Activated CD4-positive, alpha-beta memory T cell treated with anti-CD3 and anti-CD28 coated beads for 36 hours (primary cell): ENCODE measurements at regions of chr16 and their contacts with region 1.

Region 1: DNA sequence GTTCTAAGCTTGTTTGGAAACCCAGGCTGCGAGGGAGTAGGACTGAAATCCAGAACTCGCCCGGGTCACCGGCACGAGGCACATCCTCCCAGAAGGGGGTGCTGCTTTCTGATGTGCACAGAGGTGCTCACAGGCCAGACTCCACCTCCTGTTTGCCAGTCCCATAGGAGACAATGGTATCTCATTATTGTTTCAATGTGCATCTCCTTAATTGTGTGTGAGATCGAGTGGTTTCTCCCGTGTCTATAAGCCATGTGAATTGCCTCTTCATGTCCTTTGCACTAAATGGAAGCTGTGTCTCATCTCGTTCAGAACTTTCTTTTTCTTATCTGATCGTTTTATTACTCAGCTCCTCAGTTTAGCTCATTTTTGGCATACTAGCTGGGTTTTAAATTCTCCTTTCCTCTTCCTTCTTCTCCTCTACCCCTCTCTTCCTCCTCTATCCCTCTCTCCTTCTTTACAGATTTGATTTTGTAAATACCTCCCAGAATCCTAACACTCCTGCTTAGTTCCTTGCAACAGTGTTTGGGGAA is 32.1 kb upstream of the PRKCB start:
- DNase-seq: peak; percentile 78
- H3K4me3 Mint-ChIP-seq: peak overlapping the region; percentile 17
- H3K27ac Mint-ChIP-seq: no peak overlapping the region
- H3K4me1 Mint-ChIP-seq: peaks cover 9% of the 10 kb centered on the region
- H3K27me3 Mint-ChIP-seq: no peaks in the 10 kb centered on the region

Region 2: GRCh38 chr16:23863511-23864422 is 60.1 kb after region 1 on chr16:
- CTCF ChIA-PET with region 1: interaction called, 4 read pairs
- POLR2A ChIA-PET with region 1: no interaction called
- intact Hi-C with region 1: loop called (anchors 1 kb)
- DNase-seq: peak; percentile 44
- H3K4me3 Mint-ChIP-seq: peak overlapping the region; percentile 72
- H3K27ac Mint-ChIP-seq: peak overlapping the region; percentile 80
- H3K4me1 Mint-ChIP-seq: peaks cover 69% of the 10 kb centered on the region
- H3K27me3 Mint-ChIP-seq: no peaks in the 10 kb centered on the region

Region 3: DNA sequence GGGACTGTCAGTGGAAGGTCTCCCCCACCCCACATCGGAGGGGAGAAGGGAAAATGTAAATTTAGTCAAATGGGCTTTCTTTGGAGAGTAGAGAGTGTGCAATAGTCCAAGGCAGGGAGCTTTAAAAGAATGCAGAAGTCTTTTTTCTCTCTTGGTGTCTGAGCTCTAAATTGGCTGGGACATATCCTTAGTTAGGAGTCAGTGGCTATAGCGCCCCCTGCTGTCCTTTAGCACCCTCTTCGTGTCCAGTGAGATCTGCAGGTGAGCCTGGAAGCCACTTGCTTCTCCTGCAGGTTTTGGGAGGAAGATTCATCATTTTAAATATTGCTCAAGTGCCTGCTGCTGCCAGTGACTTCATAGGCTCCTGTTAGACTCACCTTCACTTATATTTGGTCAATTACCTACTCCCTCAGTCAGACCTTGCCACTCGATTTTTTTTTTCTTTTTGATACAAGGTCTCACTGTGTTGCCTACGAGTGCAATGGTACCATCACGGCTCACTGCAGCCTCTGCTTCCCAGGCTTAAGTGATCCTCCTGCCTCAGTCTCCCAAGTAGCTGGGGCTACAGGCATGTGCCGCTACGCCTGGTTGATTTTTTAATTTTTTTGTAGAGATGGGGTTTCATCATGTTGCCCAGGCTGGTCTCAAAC is 206.9 kb after region 1 on chr16:
- CTCF ChIA-PET with region 1: interaction called, 387 read pairs
- POLR2A ChIA-PET with region 1: interaction called, 3 read pairs
- intact Hi-C with region 1: loop called (anchors 1 kb)
- DNase-seq: peak; percentile 86
- H3K4me3 Mint-ChIP-seq: no peak overlapping the region
- H3K27ac Mint-ChIP-seq: no peak overlapping the region
- H3K4me1 Mint-ChIP-seq: peaks cover 49% of the 10 kb centered on the region
- H3K27me3 Mint-ChIP-seq: no peaks in the 10 kb centered on the region

Region 4: GRCh38 chr16:24041826-24042631 is 238.4 kb after region 1 on chr16:
- CTCF ChIA-PET with region 1: interaction called, 112 read pairs
- POLR2A ChIA-PET with region 1: no interaction called
- intact Hi-C with region 1: no loop called
- DNase-seq: peak; percentile 90
- H3K4me3 Mint-ChIP-seq: no peak overlapping the region
- H3K27ac Mint-ChIP-seq: no peak overlapping the region
- H3K4me1 Mint-ChIP-seq: peaks cover 8% of the 10 kb centered on the region
- H3K27me3 Mint-ChIP-seq: no peaks in the 10 kb centered on the region